ENCODE measurements at regions of chr17 and their contacts with region 1.

Region 1: DNA sequence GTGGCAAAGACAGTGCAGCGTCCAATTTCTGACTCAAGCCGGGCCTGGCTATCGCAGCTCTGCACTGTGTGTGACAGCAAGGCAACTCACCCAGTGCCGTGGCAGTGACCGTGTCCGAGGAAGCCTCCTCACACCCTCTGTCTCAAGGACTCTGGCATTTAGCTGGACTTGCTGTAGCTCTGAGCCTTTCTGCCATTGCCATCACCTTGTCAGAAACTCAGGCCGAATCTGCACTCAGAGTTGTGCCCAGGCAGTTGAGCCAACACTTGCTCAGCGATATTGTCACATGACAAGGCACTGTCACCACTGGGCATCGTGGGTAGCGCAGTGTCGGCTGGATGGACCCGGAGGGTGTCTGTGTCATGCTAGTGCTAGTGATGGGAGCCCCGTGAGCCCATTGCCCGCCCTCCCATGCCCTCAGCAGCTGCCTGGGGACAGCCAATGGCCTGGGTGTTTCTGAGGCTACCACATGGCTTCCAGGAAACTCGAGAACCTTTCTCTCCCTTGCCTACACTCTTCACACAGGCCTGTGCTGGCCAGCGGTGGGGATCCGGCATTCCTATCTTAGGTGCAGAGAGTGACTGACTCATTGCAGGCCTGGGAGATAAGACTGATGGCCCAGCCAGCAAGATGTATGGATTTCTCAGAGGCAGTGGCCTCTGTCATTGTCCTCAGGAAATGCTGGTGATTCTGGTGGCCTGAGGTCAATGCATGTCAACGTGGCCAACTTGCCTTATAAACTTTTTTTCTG is 22.1 kb upstream of the STH start:
- DNase-seq: no peak
- H3K4me3 ChIP-seq: no peak overlapping the region
- H3K4me1 ChIP-seq: no peaks in the 10 kb centered on the region
- H3K27me3 ChIP-seq: no peaks in the 10 kb centered on the region

Region 2: GRCh38 chr17:46822388-46822921 is 845.5 kb after region 1 on chr17:
- in situ Hi-C with region 1: loop called (anchors 25 kb)
- DNase-seq: peak in 1 of 2 experiments; percentile 50
- H3K4me3 ChIP-seq: no peak overlapping the region
- H3K4me1 ChIP-seq: no peaks in the 10 kb centered on the region
- H3K27me3 ChIP-seq: peaks cover 2% of the 10 kb centered on the region